ENCODE measurements at regions of chr4 and their contacts with region 1.

Region 1: GRCh38 chr4:145785391-145786008 is 105.6 kb downstream of the C4orf51 start:
- DNase-seq: no peak
- H3K4me3 Mint-ChIP-seq: no peak overlapping the region
- H3K27ac Mint-ChIP-seq: peak overlapping the region; percentile 98
- H3K4me1 Mint-ChIP-seq: peaks cover 39% of the 10 kb centered on the region
- H3K27me3 Mint-ChIP-seq: no peaks in the 10 kb centered on the region

Region 2: GRCh38 chr4:145815626-145816025 is 30.1 kb after region 1 on chr4:
- intact Hi-C with region 1: loop called (anchors 1 kb)
- DNase-seq: no peak
- H3K4me3 Mint-ChIP-seq: peak overlapping the region; percentile 61
- H3K27ac Mint-ChIP-seq: peak overlapping the region; percentile 93
- H3K4me1 Mint-ChIP-seq: peaks cover 38% of the 10 kb centered on the region
- H3K27me3 Mint-ChIP-seq: no peaks in the 10 kb centered on the region

Measured in activated CD4-positive, alpha-beta T cell treated with anti-CD3 and anti-CD28 coated beads, Interleukin-2, amount 10 ng/mL, durations not matched to agents 24 days and 14 days (primary cell).